Naive thymus-derived CD4-positive, alpha-beta T cell (primary cell): ENCODE measurements at regions of chr17 and their contacts with region 1.

Region 1: GRCh38 chr17:34361478-34362061 is 1.5 kb downstream of the CCL1 start:
- DNase-seq: peak; percentile 17 to 78 (median 40)
- ATAC-seq: peak; percentile 89
- H3K4me3 ChIP-seq: no peak overlapping the region
- H3K4me3 Mint-ChIP-seq: no peak overlapping the region
- H3K27ac ChIP-seq: no peak overlapping the region
- H3K27ac Mint-ChIP-seq: peak overlapping the region in 1 of 9 donors; percentile 21
- H3K4me1 ChIP-seq: no peaks in the 10 kb centered on the region
- H3K4me1 Mint-ChIP-seq: peaks cover 5 to 44% (median 8%) of the 10 kb centered on the region in 7 donors
- H3K27me3 ChIP-seq: no peaks in the 10 kb centered on the region
- H3K27me3 Mint-ChIP-seq: peaks cover 12 to 36% (median 16%) of the 10 kb centered on the region in 5 donors

Region 2: GRCh38 chr17:34171245-34171818 is 190.2 kb before region 1 on chr17:
- CTCF ChIA-PET with region 1: no interaction called
- POLR2A ChIA-PET with region 1: no interaction called
- intact Hi-C with region 1: loop called in 1 of 2 experiments (anchors 1 kb)
- DNase-seq: peak in 7 of 9 donors; percentile 12 to 48 (median 31)
- ATAC-seq: peak; percentile 81
- H3K4me3 ChIP-seq: no peak overlapping the region
- H3K4me3 Mint-ChIP-seq: no peak overlapping the region
- H3K27ac ChIP-seq: no peak overlapping the region
- H3K27ac Mint-ChIP-seq: no peak overlapping the region
- H3K4me1 ChIP-seq: no peaks in the 10 kb centered on the region
- H3K4me1 Mint-ChIP-seq: peaks cover 0 to 6% (median 0%) of the 10 kb centered on the region in 7 donors
- H3K27me3 ChIP-seq: no peaks in the 10 kb centered on the region
- H3K27me3 Mint-ChIP-seq: peaks cover 9 to 24% (median 15%) of the 10 kb centered on the region in 5 donors

Region 3: DNA sequence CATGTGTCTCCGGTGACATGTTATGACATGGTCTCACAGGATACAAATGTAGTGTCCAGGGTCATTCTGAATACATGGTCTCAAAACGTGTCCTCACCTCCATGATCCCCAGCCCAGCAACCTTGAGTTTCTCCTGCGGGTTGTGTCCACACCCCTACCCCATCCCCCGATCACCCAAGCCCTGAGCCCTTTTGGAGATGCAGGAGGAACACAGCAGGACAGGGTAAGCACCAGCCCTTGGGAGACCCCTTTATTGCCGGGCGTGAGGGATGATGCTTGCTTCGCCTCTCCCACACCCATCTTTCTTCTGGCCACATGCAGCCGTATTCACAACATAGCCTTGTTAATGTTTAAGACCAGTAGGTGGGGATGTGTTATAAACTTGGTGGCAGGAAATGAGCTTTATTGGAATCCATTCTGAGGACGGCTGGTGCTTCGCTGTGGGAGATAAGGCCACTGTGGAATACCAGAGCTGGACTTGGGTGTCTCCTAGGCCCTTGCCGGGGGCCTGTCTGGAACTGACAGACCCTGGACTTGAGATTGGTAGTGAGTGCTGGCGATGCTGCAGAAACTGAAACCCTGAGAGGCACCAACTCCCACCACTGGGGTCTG is 223.3 kb after region 1 on chr17:
- CTCF ChIA-PET with region 1: no interaction called
- POLR2A ChIA-PET with region 1: no interaction called
- intact Hi-C with region 1: no loop called
- DNase-seq: peak in 4 of 9 donors; percentile 21 to 35 (median 32)
- ATAC-seq: peak; percentile 51
- H3K4me3 ChIP-seq: no peak overlapping the region
- H3K4me3 Mint-ChIP-seq: no peak overlapping the region
- H3K27ac ChIP-seq: no peak overlapping the region
- H3K27ac Mint-ChIP-seq: no peak overlapping the region
- H3K4me1 ChIP-seq: peaks cover 0 to 6% of the 10 kb centered on the region in 2 donors
- H3K4me1 Mint-ChIP-seq: peaks cover 0 to 15% (median 4%) of the 10 kb centered on the region in 7 donors
- H3K27me3 ChIP-seq: peaks cover 0 to 7% of the 10 kb centered on the region in 2 donors
- H3K27me3 Mint-ChIP-seq: peaks cover 41 to 78% (median 52%) of the 10 kb centered on the region in 5 donors